ENCODE measurements at regions of chr5 and their contacts with region 1.

Region 1: DNA sequence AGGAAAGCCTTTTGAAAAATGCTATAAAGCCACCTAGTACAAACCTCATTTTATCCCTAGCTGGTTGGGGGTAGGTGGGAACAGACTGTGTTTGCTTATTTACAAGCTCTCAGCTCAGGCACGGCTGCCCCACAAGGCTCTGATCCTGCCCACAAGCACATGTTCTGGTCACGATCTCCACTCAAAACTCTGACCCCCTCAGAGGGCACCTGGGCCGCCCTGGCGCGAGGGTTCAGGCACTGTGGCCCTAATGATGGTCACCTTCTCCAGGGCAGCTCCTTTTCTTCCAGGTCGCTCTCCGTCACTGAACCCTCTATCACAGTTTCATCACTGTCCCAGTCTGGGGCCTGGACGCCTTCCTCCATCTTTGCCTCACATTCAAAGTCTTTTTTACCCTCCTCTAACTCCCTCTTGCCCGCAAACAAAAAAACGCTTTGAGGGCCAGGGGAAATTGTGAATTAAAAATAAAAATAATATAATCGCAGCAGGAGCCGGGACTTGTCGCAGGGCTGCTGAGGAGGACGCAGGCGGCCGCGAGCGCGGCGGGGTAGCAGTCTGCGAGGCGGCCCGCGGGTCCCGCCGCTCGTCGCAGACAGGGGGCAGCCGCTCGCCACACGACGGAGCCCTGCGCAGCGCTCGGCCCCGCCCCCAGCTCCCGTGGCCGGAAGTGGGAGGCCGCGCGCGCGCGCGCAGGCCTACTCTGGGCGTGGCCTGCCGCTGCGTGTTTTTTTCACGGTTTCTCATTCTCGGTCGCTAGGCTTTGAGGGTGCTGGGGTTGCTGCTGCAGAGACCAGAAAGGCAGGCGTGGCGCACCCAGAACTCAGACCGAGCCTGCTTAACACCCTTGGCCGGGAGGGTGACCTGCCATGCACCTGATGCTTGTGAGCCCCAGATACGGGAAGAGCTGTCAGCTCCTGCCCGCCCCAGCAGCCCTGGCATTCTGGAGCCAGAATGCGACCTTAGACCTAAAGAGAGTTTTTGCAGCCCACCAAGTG is at the start of gene ANKRD31:
- DNase-seq: peak; percentile 83
- H3K4me3 Mint-ChIP-seq: peak within 1 kb of the TSS; percentile 91
- H3K27ac Mint-ChIP-seq: peak within 1 kb of the TSS; percentile 88
- H3K4me1 Mint-ChIP-seq: peaks cover 8% of the 10 kb centered on the region
- H3K27me3 Mint-ChIP-seq: no peaks in the 10 kb centered on the region
- total RNA-seq, gene ANKRD31: 0.11 and 0.28 TPM in 2 replicates

Region 2: GRCh38 chr5:74934949-74935751 is 301.5 kb before region 1 on chr5:
- intact Hi-C with region 1: loop called (anchors 5 kb)
- DNase-seq: peak; percentile 11
- H3K4me3 Mint-ChIP-seq: peak overlapping the region; percentile 33
- H3K27ac Mint-ChIP-seq: peak overlapping the region; percentile 48
- H3K4me1 Mint-ChIP-seq: peaks cover 31% of the 10 kb centered on the region
- H3K27me3 Mint-ChIP-seq: peaks cover 25% of the 10 kb centered on the region

Region 3: GRCh38 chr5:75351139-75351926 is 114.7 kb after region 1 on chr5:
- intact Hi-C with region 1: loop called (anchors 5 kb)
- DNase-seq: no peak
- H3K4me3 Mint-ChIP-seq: peak overlapping the region; percentile 30
- H3K27ac Mint-ChIP-seq: peak overlapping the region; percentile 80
- H3K4me1 Mint-ChIP-seq: peaks cover 42% of the 10 kb centered on the region
- H3K27me3 Mint-ChIP-seq: no peaks in the 10 kb centered on the region

Region 4: GRCh38 chr5:75566710-75567309 is 330.2 kb after region 1 on chr5:
- intact Hi-C with region 1: loop called (anchors 5 kb)
- DNase-seq: peak; percentile 30
- H3K4me3 Mint-ChIP-seq: peak overlapping the region; percentile 20
- H3K27ac Mint-ChIP-seq: peak overlapping the region; percentile 96
- H3K4me1 Mint-ChIP-seq: peaks cover 43% of the 10 kb centered on the region
- H3K27me3 Mint-ChIP-seq: no peaks in the 10 kb centered on the region

Region 5: DNA sequence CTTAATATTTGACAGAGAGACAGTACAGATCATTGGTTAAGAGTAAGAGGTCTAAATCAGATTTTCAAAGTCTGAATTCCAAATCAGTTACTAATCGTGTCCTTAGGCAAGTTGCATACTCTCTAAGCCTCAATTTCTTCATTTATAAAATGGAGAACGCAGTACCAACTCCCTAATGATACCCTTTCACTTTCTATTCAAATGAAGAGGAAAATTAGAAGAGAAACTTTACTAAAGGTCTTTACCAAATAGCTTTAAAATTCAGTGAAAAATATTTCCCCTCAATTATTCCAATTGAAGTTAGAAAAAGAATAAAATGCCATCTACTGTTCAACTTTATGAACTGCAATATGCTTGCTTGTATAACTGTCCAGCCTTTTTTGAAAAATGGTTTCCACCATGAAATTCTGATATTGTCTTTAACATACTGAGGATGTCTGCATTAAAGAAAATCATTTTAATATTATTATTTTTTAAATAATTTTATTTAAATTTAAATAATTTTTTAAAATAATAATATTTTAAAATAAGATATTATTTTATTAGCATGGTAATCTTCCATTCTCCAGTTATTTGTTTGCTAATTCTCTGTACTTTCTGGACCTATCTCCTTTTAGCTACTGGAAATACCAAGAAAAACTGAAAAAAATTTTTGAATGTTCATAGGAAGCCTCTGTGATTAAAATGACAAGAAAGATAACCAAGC is 444.7 kb after region 1 on chr5:
- intact Hi-C with region 1: loop called (anchors 1 kb)
- DNase-seq: no peak
- H3K4me3 Mint-ChIP-seq: no peak overlapping the region
- H3K27ac Mint-ChIP-seq: no peak overlapping the region
- H3K4me1 Mint-ChIP-seq: peaks cover 23% of the 10 kb centered on the region
- H3K27me3 Mint-ChIP-seq: no peaks in the 10 kb centered on the region

Region 6: DNA sequence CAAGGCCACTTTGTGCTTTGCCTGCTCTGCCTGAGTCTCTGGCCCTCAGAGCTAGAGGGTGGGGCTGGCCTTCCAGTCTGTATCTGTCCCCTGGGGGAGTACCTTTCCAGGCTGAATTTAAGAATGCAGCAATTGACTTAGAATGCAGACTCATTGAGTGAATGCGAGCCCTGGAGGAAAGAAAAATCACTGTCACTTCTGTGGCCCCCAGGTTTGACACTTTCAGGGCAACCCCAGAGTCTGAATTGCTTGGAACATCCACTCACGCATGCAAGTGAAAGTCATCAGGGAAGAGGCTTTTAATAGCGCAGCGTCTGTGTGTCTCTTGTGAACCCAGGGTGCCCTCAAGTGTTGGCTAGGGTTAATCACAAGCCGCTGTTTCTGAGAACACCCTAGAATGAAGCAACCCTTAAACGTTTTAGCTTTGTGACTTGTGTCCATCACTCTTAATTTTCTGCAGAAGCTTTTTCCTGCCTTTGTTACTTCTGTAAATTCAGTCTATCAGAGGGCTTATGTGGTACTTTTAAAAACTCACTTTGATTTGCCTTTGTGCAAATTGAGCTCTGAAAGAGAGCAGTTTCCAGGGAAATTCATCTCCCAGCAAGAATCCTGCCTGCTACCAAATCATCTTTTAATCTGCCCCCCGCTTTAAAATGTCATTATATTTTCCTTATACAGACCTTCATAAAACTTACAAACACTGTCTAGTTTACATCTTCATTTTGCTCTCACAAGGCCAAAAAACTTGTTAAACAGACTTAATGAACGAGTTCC is 1019.7 kb after region 1 on chr5:
- intact Hi-C with region 1: loop called (anchors 2 kb)
- DNase-seq: peak; percentile 44
- H3K4me3 Mint-ChIP-seq: no peak overlapping the region
- H3K27ac Mint-ChIP-seq: no peak overlapping the region
- H3K4me1 Mint-ChIP-seq: peaks cover 7% of the 10 kb centered on the region
- H3K27me3 Mint-ChIP-seq: peaks cover 33% of the 10 kb centered on the region

Measured in activated T-helper 2 cell treated with anti-CD3 and anti-CD28 coated beads, Interferon-gamma antibody, Interleukin-2, Interleukin-4, amounts not matched to agents 10 μg/mL and 5 μg/mL and 100 μg/mL, durations not matched to agents 14 hours and 24 hours and 36 hours (primary cell).